ENCODE measurements at regions of chr17 and their contacts with region 1.

Region 1: DNA sequence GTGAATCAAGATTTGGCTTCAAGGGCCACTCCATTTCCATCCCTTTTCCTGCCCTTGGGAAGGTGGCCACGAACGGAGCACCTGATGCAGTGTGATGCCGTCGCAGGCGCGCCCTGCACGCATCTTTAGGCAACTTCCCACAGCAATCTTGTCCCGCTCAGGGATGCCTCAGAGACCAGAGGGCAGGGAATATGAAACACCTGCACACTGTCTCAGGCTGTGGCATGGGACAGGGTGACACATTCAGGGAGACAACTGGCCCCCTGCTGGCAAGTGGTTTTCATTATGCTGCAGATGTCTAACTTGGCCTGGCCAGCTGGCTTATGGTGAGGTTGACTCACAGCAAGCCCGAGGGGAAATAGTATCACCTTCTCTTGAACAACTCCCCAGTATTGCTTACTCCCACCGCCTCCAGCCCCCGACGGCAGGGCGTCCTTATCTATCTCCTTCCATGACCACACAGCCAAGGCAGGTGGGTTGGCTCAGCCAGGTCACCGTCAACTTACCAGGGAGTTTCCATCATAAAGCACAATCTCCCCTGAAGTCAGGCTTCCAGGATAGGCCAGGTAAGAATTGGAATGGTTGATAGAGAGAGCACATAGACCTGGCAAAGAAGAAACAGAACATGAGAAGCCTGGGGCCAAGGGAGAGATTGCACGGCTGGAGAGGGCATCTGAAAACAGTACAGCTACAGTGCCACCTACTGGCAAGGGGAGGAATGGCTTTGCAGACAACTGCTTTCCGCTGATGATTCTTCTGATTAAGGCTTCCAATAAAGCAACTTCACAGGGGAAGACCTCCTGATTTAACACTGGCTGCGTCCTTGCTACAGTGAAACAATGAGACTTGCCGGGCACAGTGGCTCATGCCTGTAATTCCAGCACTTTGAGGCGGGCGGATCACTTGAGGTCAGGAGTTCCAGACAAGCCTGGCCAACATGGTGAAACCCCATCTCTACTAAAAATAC is 21.1 kb downstream of the WIPI1 start:
- DNase-seq: peak; percentile 89
- ATAC-seq: peak; percentile 85
- H3K4me3 ChIP-seq: peak overlapping the region; percentile 48; the same call in 1 of the 2 replicates
- H3K27ac ChIP-seq: peak overlapping the region; percentile 81
- H3K4me1 ChIP-seq: peaks cover 10% of the 10 kb centered on the region
- H3K27me3 ChIP-seq: no peaks in the 10 kb centered on the region
- CTCF ChIP-seq: peak; percentile 86

Region 2: GRCh38 chr17:68172461-68172954 is 263.7 kb before region 1 on chr17:
- CTCF ChIA-PET with region 1: no interaction called
- POLR2A ChIA-PET with region 1: no interaction called
- intact Hi-C with region 1: loop called (anchors 1 kb)
- DNase-seq: peak; percentile 90
- ATAC-seq: peak; percentile 83
- H3K4me3 ChIP-seq: 0 out of 2 replicates have a peak overlapping the region, but pooled peaks have one; percentile 5
- H3K27ac ChIP-seq: no peak overlapping the region
- H3K4me1 ChIP-seq: no peaks in the 10 kb centered on the region
- H3K27me3 ChIP-seq: no peaks in the 10 kb centered on the region
- CTCF ChIP-seq: peak; percentile 96

Region 3: GRCh38 chr17:68260051-68260762 is 176.0 kb before region 1 on chr17:
- CTCF ChIA-PET with region 1: no interaction called
- POLR2A ChIA-PET with region 1: no interaction called
- intact Hi-C with region 1: loop called (anchors 1 kb)
- DNase-seq: no peak
- ATAC-seq: no peak
- H3K4me3 ChIP-seq: no peak overlapping the region
- H3K27ac ChIP-seq: no peak overlapping the region
- H3K4me1 ChIP-seq: no peaks in the 10 kb centered on the region
- H3K27me3 ChIP-seq: no peaks in the 10 kb centered on the region
- CTCF ChIP-seq: no peak

Region 4: DNA sequence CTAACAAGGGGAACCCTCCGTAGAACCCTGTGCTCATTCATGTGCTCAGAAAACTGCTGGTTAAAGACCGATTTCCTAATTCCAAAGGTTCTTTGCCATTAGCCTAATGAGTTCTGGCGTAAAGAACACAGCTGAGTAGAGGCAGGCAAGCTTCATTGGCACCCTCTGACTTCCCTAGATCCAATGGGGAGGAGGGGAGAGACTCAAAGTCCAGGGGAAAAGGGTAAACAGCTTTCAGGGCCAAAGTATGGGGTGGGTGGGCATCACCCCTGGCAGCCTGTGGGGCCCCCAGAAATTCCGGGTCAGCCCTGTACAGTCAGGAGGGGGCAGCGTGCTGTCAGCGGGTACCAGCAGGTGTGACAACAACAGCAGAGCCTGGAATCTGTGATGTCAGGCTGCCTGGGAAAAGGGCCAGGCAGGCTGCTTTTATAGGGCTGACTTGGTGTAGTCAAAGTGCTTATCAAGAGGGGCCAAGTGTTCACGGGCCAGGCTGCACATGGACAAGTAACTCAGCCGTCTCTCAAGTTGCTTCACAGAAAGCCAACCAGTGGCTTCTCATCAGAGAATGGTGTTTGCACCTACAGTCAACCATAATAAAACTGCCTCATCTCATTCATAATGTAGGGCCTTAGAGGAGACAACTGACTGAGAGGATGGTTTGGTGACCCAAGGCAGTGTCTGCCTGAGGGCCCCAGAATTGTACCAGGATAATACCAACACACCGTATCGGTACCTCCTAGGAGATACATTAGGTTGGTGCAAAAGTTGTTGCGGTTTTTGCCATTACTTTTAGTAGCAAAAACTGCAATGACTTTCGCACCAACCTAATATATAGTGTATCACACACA is 49.7 kb before region 1 on chr17:
- CTCF ChIA-PET with region 1: no interaction called
- POLR2A ChIA-PET with region 1: no interaction called
- intact Hi-C with region 1: no loop called
- DNase-seq: peak; percentile 78
- ATAC-seq: peak; percentile 82
- H3K4me3 ChIP-seq: no peak overlapping the region
- H3K27ac ChIP-seq: peak overlapping the region; percentile 31
- H3K4me1 ChIP-seq: peaks cover 24% of the 10 kb centered on the region
- H3K27me3 ChIP-seq: no peaks in the 10 kb centered on the region
- CTCF ChIP-seq: peak; percentile 44

Measured in PC-3 (cell line).